Activated CD4-positive, alpha-beta memory T cell treated with anti-CD3 and anti-CD28 coated beads, Interleukin-2, amount 10 ng/mL, durations not matched to agents 7 days and 5 days (primary cell): ENCODE measurements at regions of chr7 and their contacts with region 1.

Region 1: DNA sequence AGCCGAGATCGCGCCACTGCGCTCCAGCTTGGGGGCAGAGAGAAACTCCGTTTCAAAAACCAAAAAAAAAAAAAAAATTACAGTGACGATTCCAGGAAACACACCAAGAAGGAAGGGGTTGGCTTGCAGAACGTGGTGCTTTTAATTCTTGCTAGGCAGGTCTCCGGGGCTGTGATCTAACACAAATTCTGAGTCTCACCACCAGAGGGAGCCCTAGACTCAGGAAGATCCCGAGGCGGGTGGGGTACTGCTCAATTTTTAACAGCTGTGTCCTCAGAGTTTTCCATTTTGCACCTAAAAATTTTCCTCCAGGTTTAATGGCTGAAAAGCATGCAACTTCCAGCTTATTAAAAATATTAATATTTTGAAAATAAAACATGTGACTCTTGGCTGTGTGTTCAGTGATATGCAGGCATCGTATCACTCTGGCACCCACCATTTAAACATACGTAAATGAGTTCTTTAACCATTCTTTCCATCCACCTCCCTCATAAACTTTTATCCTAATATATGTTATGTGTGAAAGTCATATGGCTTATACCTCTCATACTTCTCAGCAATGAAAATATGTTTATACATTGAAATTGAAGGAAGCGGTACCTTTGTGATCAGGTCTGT is 26.5 kb upstream of the NUB1 start:
- DNase-seq: peak; percentile 80
- H3K4me3 Mint-ChIP-seq: peak overlapping the region; percentile 48
- H3K27ac Mint-ChIP-seq: no peak overlapping the region
- H3K4me1 Mint-ChIP-seq: peaks cover 14% of the 10 kb centered on the region
- H3K27me3 Mint-ChIP-seq: no peaks in the 10 kb centered on the region

Region 2: GRCh38 chr7:151327659-151328058 is 12.5 kb after region 1 on chr7:
- CTCF ChIA-PET with region 1: interaction called, 35 read pairs
- POLR2A ChIA-PET with region 1: no interaction called
- DNase-seq: no peak
- H3K4me3 Mint-ChIP-seq: no peak overlapping the region
- H3K27ac Mint-ChIP-seq: no peak overlapping the region
- H3K4me1 Mint-ChIP-seq: no peaks in the 10 kb centered on the region
- H3K27me3 Mint-ChIP-seq: peaks cover 16% of the 10 kb centered on the region

Region 3: DNA sequence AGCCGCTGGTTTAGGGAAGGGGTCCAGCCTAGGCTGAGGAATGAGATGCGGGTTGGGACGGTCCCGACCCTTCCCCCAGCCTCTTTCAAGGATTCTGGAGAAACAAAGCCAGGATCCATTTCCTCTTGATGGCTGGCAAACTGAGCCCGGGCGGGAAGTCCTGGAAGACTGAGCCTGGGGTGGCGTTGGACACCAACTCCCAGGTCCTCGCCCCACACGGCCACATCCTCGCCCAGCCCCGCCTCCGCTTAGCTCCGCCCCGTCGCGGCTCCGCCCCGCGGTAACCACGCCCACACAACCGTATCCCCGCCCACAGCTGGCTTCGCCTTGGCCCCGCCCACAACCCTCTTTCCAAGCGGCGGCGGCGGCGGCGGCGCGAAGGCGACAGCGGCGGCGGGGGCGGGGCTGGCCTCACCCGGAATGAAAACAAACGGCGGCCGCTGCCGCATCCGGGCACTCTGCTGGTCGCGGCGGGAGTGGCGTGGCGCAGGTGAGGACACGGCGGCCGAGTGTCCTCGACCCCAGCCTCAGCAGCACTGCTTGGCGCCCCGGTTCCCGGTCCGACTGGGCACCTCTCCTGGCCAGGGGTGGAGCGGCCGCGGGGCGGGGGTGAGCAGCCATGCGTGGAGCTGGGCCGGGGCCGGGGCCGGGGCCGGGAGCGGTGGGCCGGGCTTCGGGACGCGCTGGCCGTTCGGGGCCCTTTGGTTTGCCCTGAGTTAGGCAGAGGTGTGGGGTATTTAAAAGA is 26.4 kb after region 1 on chr7 and contains the start of gene NUB1:
- CTCF ChIA-PET with region 1: interaction called, 38 read pairs
- POLR2A ChIA-PET with region 1: interaction called, 8 read pairs
- DNase-seq: peak; percentile 95
- H3K4me3 Mint-ChIP-seq: peak within 1 kb of the TSS; percentile 78
- H3K27ac Mint-ChIP-seq: peak within 1 kb of the TSS; percentile 76
- H3K4me1 Mint-ChIP-seq: peaks cover 31% of the 10 kb centered on the region
- H3K27me3 Mint-ChIP-seq: no peaks in the 10 kb centered on the region
- total RNA-seq, gene NUB1: 62.1 to 67.3 TPM

Region 4: GRCh38 chr7:151368136-151368571 is 53.0 kb after region 1 on chr7:
- CTCF ChIA-PET with region 1: interaction called, 18 read pairs
- POLR2A ChIA-PET with region 1: no interaction called
- DNase-seq: peak; percentile 77
- H3K4me3 Mint-ChIP-seq: no peak overlapping the region
- H3K27ac Mint-ChIP-seq: no peak overlapping the region
- H3K4me1 Mint-ChIP-seq: peaks cover 11% of the 10 kb centered on the region
- H3K27me3 Mint-ChIP-seq: no peaks in the 10 kb centered on the region